AG04450 (cell line): ENCODE measurements at regions of chr11 and their contacts with region 1.

Region 1: GRCh38 chr11:61899146-61899841 is 7.9 kb upstream of the FADS3 start:
- DNase-seq: no peak
- H3K4me3 ChIP-seq: no peak overlapping the region
- H3K27ac ChIP-seq: no peak overlapping the region
- H3K27me3 ChIP-seq: no peaks in the 10 kb centered on the region
- CTCF ChIP-seq: peak; percentile 99

Region 2: DNA sequence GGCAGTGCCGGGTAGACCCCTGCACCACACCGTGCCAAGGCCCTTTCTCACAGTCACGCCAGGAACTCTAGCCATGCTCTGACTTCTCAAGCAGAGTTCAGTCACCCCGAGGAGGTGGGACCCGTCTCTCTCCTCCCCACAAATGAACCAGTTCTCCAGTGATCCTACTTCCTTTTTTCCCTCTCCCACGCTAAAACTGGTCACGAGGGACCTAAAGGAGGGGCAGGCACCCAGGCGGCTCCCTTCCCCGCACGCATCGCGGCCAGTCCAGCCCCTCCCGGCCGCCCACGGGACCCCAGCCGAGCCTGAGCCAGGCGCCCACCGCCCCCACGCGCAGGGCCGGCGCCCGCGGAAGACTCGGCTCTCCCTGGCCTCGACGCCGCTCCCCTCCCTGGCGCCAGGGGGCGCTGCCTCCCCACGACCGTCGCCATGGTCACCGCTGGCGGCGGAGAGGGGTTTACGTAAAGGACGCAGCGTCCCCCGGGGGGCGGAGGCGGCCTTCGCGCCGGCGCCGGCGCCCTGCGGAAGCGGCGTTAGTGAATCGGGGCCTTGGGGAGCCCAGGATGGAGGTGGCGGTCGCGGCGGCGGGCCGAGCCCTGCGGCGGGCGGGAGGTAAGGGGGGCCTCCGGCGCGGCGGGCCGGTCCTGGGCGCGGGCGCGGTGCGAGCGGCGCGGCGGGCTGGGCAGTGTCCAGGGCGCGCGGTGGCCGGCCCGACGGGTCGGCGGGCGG is 219.2 kb before region 1 on chr11 and contains the start of gene DAGLA:
- CTCF ChIA-PET with region 1: no interaction called
- POLR2A ChIA-PET with region 1: no interaction called
- DNase-seq: no peak
- H3K4me3 ChIP-seq: peak within 1 kb of the TSS; percentile 62
- H3K27ac ChIP-seq: no peak within 1 kb of the TSS
- H3K27me3 ChIP-seq: peaks cover 57% of the 10 kb centered on the region
- CTCF ChIP-seq: peak; percentile 82
- polyA plus RNA-seq, gene DAGLA: 1.1 and 1.7 TPM in 2 replicates

Region 3: GRCh38 chr11:61923166-61924063 is 24.1 kb after region 1 on chr11:
- CTCF ChIA-PET with region 1: interaction called, 48 read pairs
- POLR2A ChIA-PET with region 1: no interaction called
- DNase-seq: peak; percentile 34
- H3K4me3 ChIP-seq: no peak overlapping the region
- H3K27ac ChIP-seq: peak overlapping the region; percentile 73
- H3K27me3 ChIP-seq: peaks cover 16% of the 10 kb centered on the region
- CTCF ChIP-seq: no peak

Region 4: DNA sequence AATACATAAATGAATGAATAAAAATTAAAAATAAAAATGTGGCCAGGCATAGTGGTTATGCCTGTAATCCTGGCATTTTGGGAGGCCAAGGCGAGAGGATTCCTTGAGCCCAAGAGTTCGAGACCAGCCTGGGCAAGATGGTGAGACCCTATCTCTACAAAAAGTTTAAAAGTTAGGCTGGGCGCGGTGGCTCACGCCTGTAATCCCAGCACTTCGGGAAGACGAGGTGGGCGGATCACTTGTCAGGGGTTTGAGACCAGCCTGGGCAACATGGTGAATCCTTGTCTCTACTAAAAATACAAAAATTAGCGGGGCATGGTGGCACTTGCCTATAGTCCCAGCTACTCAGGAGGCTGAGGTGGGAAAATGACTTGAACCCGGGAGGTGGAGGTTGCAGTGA is 41.2 kb after region 1 on chr11:
- CTCF ChIA-PET with region 1: interaction called, 345 read pairs
- POLR2A ChIA-PET with region 1: no interaction called
- DNase-seq: no peak
- H3K4me3 ChIP-seq: no peak overlapping the region
- H3K27ac ChIP-seq: no peak overlapping the region
- H3K27me3 ChIP-seq: peaks cover 18% of the 10 kb centered on the region
- CTCF ChIP-seq: no peak

Region 5: DNA sequence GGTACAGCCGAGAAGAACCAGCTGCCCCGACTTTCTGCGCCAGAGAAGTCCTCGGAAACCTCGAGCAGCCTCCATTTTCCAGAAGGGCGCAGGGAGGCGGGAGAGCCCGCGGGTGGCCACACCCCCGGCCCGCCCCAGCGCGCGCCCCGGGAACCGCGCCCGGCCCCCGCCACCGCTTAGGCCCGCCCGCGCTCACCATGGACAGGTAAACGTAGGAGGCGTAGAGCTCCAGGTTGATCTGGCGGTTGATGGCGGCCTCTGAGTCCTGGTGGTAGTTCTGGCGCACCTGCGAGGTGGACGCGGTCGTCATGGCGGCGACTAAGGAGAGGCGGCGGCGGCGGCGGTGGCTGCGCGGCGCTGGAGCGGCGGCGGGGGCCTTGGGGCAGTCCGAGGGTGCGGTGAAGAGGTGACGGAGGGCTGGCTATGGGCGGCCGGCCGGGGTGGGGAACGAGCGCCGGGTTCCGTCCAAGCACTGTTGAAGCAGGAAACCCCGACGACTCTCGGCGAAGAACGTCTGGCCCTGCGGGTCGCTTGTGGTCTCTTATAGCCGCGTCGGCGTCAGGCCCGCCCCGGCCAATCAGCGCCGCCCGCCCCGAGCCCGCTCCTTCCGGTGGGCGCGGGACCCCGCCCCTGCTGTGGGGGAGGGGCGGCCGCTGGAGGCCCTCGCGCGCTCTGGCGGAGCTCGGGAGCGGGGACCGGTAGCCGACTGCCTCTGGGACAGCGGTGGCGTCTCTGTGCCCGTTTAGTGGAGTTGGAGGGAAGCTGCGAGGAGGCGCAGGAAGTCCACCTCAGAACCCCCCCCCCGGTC is 68.0 kb after region 1 on chr11 and contains the start of gene FTH1:
- CTCF ChIA-PET with region 1: interaction called, 22 read pairs
- POLR2A ChIA-PET with region 1: interaction called, 6 read pairs
- DNase-seq: peak; percentile 77
- H3K4me3 ChIP-seq: peak within 1 kb of the TSS; percentile 100
- H3K27ac ChIP-seq: peak within 1 kb of the TSS; percentile 88
- H3K27me3 ChIP-seq: no peaks in the 10 kb centered on the region
- CTCF ChIP-seq: no peak
- polyA plus RNA-seq, gene FTH1: 3,294 and 4,220 TPM in 2 replicates

Region 6: GRCh38 chr11:62195945-62196344 is 296.7 kb after region 1 on chr11:
- CTCF ChIA-PET with region 1: no interaction called
- POLR2A ChIA-PET with region 1: no interaction called
- DNase-seq: no peak
- H3K4me3 ChIP-seq: no peak overlapping the region
- H3K27ac ChIP-seq: no peak overlapping the region
- H3K27me3 ChIP-seq: no peaks in the 10 kb centered on the region
- CTCF ChIP-seq: no peak